HepG2 (cell line): ENCODE measurements at regions of chr17 and their contacts with region 1.

Region 1: GRCh38 chr17:79991140-79991923 is 44.3 kb downstream of the TBC1D16 start:
- DNase-seq: peak; percentile 85
- ATAC-seq: peak; percentile 58
- H3K4me3 ChIP-seq: peak overlapping the region; percentile 51 to 77 (median 62); a peak in 4 of 6 replicates
- H3K27ac ChIP-seq: peak overlapping the region; percentile 98
- H3K4me1 ChIP-seq: peaks cover 90% of the 10 kb centered on the region
- H3K27me3 ChIP-seq: no peaks in the 10 kb centered on the region
- CTCF ChIP-seq: peak; percentile 81
- EP300 ChIP-seq: no peak
- POLR2A ChIP-seq: no peak
- RAD21 ChIP-seq: no peak; the same call in 1 of the 2 replicates

Region 2: GRCh38 chr17:79741751-79742588 is 249.4 kb before region 1 on chr17:
- CTCF ChIA-PET with region 1: interaction called, 5 read pairs
- POLR2A ChIA-PET with region 1: interaction called, 46 read pairs
- in situ Hi-C with region 1: no loop called
- intact Hi-C with region 1: loop called (anchors 5 kb)
- DNase-seq: peak; percentile 67
- ATAC-seq: peak; percentile 53
- H3K4me3 ChIP-seq: peak overlapping the region; percentile 53 to 75 (median 56)
- H3K27ac ChIP-seq: peak overlapping the region; percentile 38
- H3K4me1 ChIP-seq: peaks cover 93% of the 10 kb centered on the region
- H3K27me3 ChIP-seq: peaks cover 7 to 11% of the 10 kb centered on the region in 2 experiments; a peak in 4 of 5 replicates
- CTCF ChIP-seq: peak; percentile 98
- EP300 ChIP-seq: peak in 1 of 2 experiments; percentile 30; a peak in 1 of 4 replicates
- POLR2A ChIP-seq: no peak
- RAD21 ChIP-seq: peak; percentile 86

Region 3: GRCh38 chr17:79818026-79818758 is 173.1 kb before region 1 on chr17:
- CTCF ChIA-PET with region 1: interaction called, 3 read pairs
- POLR2A ChIA-PET with region 1: interaction called, 26 read pairs
- in situ Hi-C with region 1: loop called (anchors 5 kb)
- intact Hi-C with region 1: no loop called
- DNase-seq: no peak
- ATAC-seq: peak; percentile 66
- H3K4me3 ChIP-seq: no peak overlapping the region; a peak in 1 of 6 replicates
- H3K27ac ChIP-seq: no peak overlapping the region
- H3K4me1 ChIP-seq: peaks cover 58% of the 10 kb centered on the region
- H3K27me3 ChIP-seq: peaks cover 3 to 33% of the 10 kb centered on the region in 2 experiments; a peak in 4 of 5 replicates
- CTCF ChIP-seq: peak; percentile 53
- EP300 ChIP-seq: no peak
- POLR2A ChIP-seq: no peak
- RAD21 ChIP-seq: peak; percentile 44; the same call in 1 of the 2 replicates

Region 4: DNA sequence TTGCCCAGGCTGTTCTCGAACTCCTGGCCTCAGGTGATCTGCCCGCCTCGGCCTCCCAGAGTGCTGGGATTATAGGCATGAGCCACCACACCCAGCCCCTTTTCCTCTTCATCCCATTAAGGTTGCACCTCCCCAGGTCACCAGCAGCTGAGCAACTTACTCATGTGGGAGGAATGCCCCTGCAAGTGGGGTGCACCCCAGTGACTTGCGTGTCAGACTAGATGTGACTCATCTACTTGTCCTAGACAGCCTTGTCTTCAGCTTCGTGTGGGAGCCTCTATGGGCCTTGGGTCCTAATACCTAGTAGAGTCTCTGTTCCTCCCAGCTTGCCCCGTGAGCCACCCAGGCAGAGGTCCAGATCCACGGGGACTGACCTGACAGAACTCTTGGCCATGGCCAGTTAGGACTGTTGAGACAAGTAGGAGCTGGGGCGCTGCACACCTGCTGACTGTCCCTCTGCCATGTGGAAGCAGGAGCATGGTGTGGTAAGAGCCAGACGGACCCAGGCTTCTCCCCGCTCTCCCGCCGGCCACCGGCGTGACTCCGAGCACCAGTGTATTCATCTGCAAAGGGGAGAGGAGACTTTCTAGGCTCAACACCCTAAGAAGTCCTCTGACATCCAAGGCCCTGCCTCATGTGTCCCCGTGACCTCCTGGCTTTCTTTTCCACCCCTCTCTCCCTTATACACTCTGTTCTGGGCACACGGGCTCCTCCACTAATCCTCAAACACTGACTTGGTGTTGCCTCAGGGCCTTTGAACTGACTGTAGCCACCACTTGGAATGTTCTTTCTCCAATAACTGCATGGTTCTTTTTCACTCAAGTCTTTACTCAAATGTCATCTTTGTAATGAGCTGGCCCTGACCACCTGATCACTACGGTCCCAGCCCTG is 140.5 kb before region 1 on chr17:
- CTCF ChIA-PET with region 1: interaction called, 6 read pairs
- POLR2A ChIA-PET with region 1: interaction called, 333 read pairs
- in situ Hi-C with region 1: no loop called
- intact Hi-C with region 1: no loop called
- DNase-seq: no peak
- ATAC-seq: no peak
- H3K4me3 ChIP-seq: no peak overlapping the region
- H3K27ac ChIP-seq: no peak overlapping the region
- H3K4me1 ChIP-seq: peaks cover 90% of the 10 kb centered on the region
- H3K27me3 ChIP-seq: peaks cover under 1% of the 10 kb centered on the region in 2 experiments; a peak in 1 of 5 replicates
- CTCF ChIP-seq: no peak
- EP300 ChIP-seq: no peak
- POLR2A ChIP-seq: no peak
- RAD21 ChIP-seq: no peak

Region 5: GRCh38 chr17:79970576-79971068 is 20.7 kb before region 1 on chr17:
- CTCF ChIA-PET with region 1: interaction called, 4 read pairs
- POLR2A ChIA-PET with region 1: interaction called, 5 read pairs
- in situ Hi-C with region 1: no loop called
- intact Hi-C with region 1: loop called (anchors 2 kb)
- DNase-seq: peak; percentile 77
- ATAC-seq: peak; percentile 70
- H3K4me3 ChIP-seq: no peak overlapping the region
- H3K27ac ChIP-seq: no peak overlapping the region
- H3K4me1 ChIP-seq: 0 out of 2 replicates have a peak, but pooled peaks cover 5% of the 10 kb centered on the region
- H3K27me3 ChIP-seq: no peaks in the 10 kb centered on the region
- CTCF ChIP-seq: peak; percentile 80
- EP300 ChIP-seq: no peak
- POLR2A ChIP-seq: no peak
- RAD21 ChIP-seq: peak; percentile 83

Region 6: DNA sequence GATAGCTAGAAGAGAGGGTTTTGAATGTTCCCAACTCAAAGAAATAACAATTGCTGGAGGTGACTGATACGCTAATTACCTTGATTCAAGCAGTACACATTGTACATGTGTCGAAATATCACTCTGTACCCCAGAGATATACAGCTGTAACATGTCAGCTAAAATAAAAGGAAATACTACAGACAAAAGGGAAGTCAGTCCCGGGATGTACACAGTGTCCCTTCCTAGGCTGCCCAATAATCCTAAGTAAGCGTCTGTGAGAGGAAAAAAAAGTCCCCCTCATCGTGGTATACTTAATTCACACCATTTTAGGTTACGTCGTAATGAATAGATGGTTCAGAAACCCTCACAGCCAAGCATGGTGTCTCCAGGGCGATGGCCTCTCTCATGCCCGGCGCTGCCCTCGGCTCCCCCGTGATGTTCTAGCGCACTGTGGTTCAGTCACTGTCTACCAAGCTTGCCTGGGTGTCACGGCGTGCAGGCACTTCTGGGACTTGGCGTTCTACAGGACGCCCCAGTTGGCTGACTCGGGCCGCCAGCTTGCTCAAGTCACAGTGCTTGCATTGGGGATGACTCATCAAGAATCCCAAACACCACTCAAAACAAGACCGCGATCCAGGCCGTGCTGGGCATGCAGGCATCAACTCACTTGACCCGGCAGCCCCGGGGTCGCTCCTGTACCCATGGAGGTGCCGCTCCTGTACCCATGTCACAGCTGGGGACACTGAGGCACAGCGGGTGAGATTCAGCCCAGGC is 72.7 kb after region 1 on chr17:
- CTCF ChIA-PET with region 1: no interaction called
- POLR2A ChIA-PET with region 1: no interaction called
- in situ Hi-C with region 1: no loop called
- intact Hi-C with region 1: no loop called
- DNase-seq: peak; percentile 81
- ATAC-seq: peak; percentile 70
- H3K4me3 ChIP-seq: no peak overlapping the region; a peak in 1 of 6 replicates
- H3K27ac ChIP-seq: no peak overlapping the region
- H3K4me1 ChIP-seq: peaks cover 36% of the 10 kb centered on the region
- H3K27me3 ChIP-seq: no peaks in the 10 kb centered on the region
- CTCF ChIP-seq: no peak
- EP300 ChIP-seq: no peak
- POLR2A ChIP-seq: no peak
- RAD21 ChIP-seq: no peak

Region 7: DNA sequence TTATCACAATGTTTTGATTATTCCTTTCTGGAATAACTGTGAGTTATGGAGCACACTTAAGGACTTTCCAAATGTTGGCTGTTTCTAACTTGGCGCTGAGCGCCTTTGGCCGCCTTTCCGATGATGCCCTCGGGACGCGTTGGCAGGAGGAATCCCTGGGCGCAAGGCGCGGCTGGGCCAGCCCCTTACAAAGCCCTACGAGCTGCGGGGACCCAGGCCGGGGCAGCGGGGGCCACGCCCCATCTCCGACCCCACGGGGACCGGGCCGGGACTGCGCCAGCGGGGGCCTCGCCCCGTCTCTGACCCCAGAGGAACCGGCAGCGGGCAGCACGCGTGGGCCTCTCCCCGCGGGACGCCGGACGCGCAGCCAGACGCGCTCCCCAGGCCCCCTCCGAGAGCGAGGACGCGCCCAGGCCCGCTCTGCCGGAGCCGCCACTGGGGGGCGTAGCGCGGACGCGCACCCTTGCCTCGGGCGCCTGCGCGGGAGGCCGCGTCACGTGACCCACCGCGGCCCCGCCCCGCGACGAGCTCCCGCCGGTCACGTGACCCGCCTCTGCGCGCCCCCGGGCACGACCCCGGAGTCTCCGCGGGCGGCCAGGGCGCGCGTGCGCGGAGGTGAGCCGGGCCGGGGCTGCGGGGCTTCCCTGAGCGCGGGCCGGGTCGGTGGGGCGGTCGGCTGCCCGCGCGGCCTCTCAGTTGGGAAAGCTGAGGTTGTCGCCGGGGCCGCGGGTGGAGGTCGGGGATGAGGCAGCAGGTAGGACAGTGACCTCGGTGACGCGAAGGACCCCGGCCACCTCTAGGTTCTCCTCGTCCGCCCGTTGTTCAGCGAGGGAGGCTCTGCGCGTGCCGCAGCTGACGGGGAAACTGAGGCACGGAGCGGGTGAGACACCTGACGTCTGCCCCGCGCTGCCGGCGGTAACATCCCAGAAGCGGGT is 109.9 kb after region 1 on chr17 and contains the start of gene GAA:
- CTCF ChIA-PET with region 1: no interaction called
- POLR2A ChIA-PET with region 1: interaction called, 15 read pairs
- in situ Hi-C with region 1: no loop called
- intact Hi-C with region 1: no loop called
- DNase-seq: peak; percentile 62
- ATAC-seq: peak; percentile 75
- H3K4me3 ChIP-seq: peak within 1 kb of the TSS; percentile 84 to 100 (median 91)
- H3K27ac ChIP-seq: peak within 1 kb of the TSS; percentile 68
- H3K4me1 ChIP-seq: peaks cover 49% of the 10 kb centered on the region
- H3K27me3 ChIP-seq: peaks cover 2 to 31% of the 10 kb centered on the region in 2 experiments; a peak in 3 of 5 replicates
- CTCF ChIP-seq: peak; percentile 86
- EP300 ChIP-seq: peak; percentile 12 to 73; a peak in 2 of 4 replicates
- POLR2A ChIP-seq: peak in 1 of 2 experiments; percentile 82; a peak in 3 of 4 replicates
- RAD21 ChIP-seq: peak; percentile 96
- total RNA-seq, gene GAA: 13.4 and 36.4 TPM in 2 replicates

Region 8: DNA sequence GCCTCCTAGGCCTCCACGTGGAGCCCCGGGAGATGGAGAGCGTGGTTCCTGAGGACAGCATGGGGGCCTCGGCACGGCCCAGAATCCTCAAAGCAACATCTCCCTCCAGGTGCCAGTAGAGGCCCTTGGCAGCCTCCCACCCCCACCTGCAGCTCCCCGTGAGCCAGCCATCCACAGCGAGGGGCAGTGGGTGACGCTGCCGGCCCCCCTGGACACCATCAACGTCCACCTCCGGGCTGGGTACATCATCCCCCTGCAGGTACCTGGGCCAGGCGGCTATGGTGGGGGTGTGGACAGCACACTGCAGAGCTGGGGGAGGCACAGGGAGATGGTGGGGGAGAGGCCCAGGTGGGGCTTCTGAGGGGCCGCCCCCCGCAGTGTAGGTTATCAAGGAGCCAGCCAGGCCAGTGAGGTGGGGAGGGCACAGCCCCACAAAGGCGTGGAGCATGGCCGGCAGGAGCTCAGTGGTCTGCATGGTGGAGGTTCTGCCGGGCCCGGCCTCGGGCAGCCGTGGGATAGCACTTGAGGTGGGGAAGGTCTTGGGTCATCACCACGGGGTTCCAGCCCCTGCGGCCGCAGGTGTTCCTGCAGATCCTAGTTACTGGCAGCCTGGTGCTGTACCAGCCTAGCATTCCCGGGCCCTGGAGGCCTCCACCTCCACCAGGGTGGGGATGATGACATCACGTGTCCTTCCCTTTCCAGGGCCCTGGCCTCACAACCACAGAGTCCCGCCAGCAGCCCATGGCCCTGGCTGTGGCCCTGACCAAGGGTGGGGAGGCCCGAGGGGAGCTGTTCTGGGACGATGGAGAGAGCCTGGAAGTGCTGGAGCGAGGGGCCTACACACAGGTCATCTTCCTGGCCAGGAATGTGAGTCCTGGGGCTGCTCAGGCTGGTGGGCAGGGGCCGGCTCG is 126.4 kb after region 1 on chr17:
- CTCF ChIA-PET with region 1: no interaction called
- POLR2A ChIA-PET with region 1: no interaction called
- in situ Hi-C with region 1: no loop called
- intact Hi-C with region 1: no loop called
- DNase-seq: no peak
- ATAC-seq: peak; percentile 12
- H3K4me3 ChIP-seq: no peak overlapping the region
- H3K27ac ChIP-seq: no peak overlapping the region
- H3K4me1 ChIP-seq: no peaks in the 10 kb centered on the region
- H3K27me3 ChIP-seq: no peaks in the 10 kb centered on the region
- CTCF ChIP-seq: no peak
- EP300 ChIP-seq: no peak
- POLR2A ChIP-seq: no peak
- RAD21 ChIP-seq: no peak